ENCODE measurements at regions of chr10 and their contacts with region 1.

Region 1: GRCh38 chr10:97659589-97659988 is 19.1 kb downstream of the PI4K2A start:
- DNase-seq: peak; percentile 75
- ATAC-seq: peak; percentile 49
- H3K4me3 ChIP-seq: no peak overlapping the region
- H3K27ac ChIP-seq: no peak overlapping the region
- H3K4me1 ChIP-seq: no peaks in the 10 kb centered on the region; the same call in 1 of the 2 replicates
- H3K27me3 ChIP-seq: no peaks in the 10 kb centered on the region
- CTCF ChIP-seq: no peak
- POLR2A ChIP-seq: no peak
- RAD21 ChIP-seq: no peak

Region 2: DNA sequence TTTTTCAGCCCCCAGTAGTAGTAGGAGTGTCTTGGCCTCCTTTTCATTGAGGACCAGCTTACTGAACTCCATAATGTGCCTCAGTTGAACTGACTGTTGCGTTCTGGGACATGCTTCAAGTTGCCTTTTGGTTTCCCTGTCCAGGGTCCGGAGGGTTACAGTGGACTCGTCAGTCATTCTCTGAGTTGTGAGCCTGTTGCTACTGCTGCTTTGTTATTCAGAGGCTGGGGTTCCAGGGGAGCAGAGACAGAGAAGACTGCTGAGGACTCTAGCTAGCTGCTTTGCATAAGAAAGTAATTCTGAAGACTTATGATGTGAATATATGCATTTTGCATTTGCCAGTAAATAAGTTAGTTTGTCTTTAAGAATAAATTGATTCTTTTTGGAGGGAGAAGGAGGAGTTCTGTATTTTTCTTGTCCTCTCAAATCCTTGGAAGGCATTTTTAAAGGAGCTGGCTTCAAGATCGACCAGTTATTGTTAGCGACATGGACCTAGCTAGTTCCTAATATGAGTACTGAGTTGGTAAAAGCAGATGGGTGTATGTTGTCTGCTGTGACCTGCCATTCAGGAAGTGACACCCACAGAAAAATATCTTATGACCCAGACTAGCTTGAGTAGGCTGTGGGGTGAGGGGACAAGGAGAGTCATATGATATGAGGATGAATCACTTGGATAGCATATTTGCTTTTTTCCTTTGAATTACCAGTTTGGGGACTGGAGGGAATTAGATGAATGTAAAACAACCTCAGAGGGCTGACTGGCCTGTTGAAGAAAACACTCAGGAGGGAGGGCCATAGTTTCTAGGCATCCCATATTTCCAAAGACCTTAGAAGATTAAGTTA is 10.8 kb before region 1 on chr10:
- CTCF ChIA-PET with region 1: no interaction called
- POLR2A ChIA-PET with region 1: interaction called, 42 read pairs
- dilution Hi-C with region 1: no loop called
- in situ Hi-C with region 1: no loop called
- intact Hi-C with region 1: no loop called
- DNase-seq: peak; percentile 96
- ATAC-seq: peak; percentile 92
- H3K4me3 ChIP-seq: no peak overlapping the region
- H3K27ac ChIP-seq: peak overlapping the region; percentile 99
- H3K4me1 ChIP-seq: peaks cover 19% of the 10 kb centered on the region
- H3K27me3 ChIP-seq: no peaks in the 10 kb centered on the region
- CTCF ChIP-seq: no peak
- POLR2A ChIP-seq: peak; percentile 66; the same call in 1 of the 2 replicates
- RAD21 ChIP-seq: no peak; the same call in 1 of the 2 replicates